T-cell (primary cell): ENCODE measurements at regions of chr20 and their contacts with region 1.

Region 1: DNA sequence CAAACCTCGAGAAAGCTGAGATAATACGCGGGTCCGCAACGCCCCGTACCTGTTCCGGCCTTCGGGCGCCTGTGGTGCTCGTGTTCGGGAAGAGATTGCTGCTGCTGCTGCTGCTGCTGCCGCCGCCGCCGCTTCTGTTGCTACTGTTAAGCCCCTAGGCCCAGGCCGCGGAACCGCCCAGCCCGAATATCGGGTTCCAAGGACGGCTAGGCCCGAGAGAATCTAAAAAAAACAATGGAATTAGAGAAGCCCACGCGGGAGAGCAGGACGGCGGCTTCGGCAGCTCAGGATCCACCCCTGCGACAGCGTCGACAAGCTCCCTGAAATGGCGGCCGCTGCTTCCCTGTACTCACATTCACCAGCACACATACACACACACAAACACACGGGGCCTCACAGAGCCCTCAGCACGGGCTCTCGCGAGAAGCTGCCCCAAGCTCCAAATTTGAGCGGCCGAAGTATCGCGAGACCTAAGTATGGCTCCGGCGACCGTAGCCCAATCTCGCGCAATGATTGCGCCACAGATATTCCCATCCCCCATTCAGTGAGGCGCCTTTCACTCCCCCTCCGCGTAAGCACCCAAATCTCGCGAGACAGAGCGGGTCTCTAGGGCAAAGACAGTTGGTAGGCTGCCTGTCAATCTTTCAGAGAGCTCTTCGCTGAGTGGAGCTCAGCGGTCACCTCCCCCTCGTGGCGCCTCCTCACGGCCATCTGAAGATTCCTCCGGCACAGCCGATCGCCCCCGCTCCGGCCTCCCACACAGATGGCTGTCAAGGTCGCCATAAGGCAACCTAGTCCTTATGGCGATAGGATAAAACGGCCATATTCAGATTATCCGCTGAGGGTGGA is at the start of gene RBM39:
- DNase-seq: peak; percentile 96 to 100 (median 99)
- ATAC-seq: peak; percentile 85 to 88 (median 86)
- H3K4me3 ChIP-seq: peak within 1 kb of the TSS; percentile 89 to 99
- H3K4me3 Mint-ChIP-seq: peak within 1 kb of the TSS; percentile 94 to 100 (median 99)
- H3K27ac ChIP-seq: peak within 1 kb of the TSS; percentile 99
- H3K27ac Mint-ChIP-seq: peak within 1 kb of the TSS; percentile 100
- H3K4me1 ChIP-seq: peaks cover 43% of the 10 kb centered on the region in 2 experiments
- H3K4me1 Mint-ChIP-seq: peaks cover 48 to 70% (median 52%) of the 10 kb centered on the region in 3 donors
- H3K27me3 ChIP-seq: no peaks in the 10 kb centered on the region
- H3K27me3 Mint-ChIP-seq: no peaks in the 10 kb centered on the region
- total RNA-seq, gene RBM39: 482 to 966 (median 536) TPM

Region 2: GRCh38 chr20:35699127-35699975 is 42.8 kb before region 1 on chr20 and contains the starts of genes NFS1 and ROMO1:
- CTCF ChIA-PET with region 1: interaction called in 1 of 2 experiments, 13 read pairs
- POLR2A ChIA-PET with region 1: interaction called, 4 to 13 read pairs
- DNase-seq: peak; percentile 59 to 93 (median 85)
- ATAC-seq: peak; percentile 86 to 95 (median 92)
- H3K4me3 ChIP-seq: peak within 1 kb of the TSS; percentile 66 to 94
- H3K4me3 Mint-ChIP-seq: peak within 1 kb of the TSS; percentile 87 to 100 (median 89)
- H3K27ac ChIP-seq: peak within 1 kb of the TSS; percentile 87
- H3K27ac Mint-ChIP-seq: peak within 1 kb of the TSS; percentile 89 to 93
- H3K4me1 ChIP-seq: peaks cover 16 to 19% of the 10 kb centered on the region in 2 experiments
- H3K4me1 Mint-ChIP-seq: peaks cover 47 to 60% (median 57%) of the 10 kb centered on the region in 3 donors
- H3K27me3 ChIP-seq: no peaks in the 10 kb centered on the region
- H3K27me3 Mint-ChIP-seq: no peaks in the 10 kb centered on the region
- total RNA-seq, gene NFS1: 17.7 to 33.5 (median 31.2) TPM
- total RNA-seq, gene ROMO1: 38.4 to 79.7 (median 62.5) TPM

Region 3: DNA sequence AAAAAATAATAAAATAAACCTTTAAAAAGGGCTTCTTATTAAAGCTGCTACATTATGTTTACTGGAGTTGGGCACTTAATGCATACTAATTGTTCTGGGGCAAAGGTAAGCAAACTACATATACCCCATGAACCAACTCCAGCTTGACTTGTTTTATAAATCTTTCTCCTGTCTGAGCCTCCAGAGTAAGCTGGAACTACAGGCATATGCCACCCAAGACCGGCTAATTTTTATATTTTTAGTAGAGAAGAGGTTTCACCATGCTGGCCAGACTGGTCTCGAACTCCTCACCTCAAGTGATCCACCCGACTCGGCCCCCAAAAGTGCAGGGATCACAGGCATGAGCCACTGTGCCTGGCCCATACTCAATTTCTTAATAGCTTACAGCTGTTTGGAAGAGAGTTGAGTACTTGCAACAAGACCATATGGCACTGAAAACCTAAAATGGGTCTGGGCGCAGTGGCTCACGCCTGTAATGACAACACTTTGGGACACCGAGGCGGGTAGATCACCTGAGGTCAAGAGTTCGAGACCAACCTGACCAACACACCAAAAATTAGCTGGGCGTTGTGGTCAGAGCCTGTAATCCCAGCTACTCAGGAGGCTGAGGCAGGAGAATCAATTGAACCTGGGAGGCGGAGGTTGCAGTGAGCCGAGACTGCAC is 23.0 kb before region 1 on chr20:
- CTCF ChIA-PET with region 1: interaction called in 1 of 2 experiments, 6 read pairs
- POLR2A ChIA-PET with region 1: interaction called, 6 to 20 read pairs
- DNase-seq: no peak
- ATAC-seq: peak in 1 of 4 experiments; percentile 4
- H3K4me3 ChIP-seq: no peak overlapping the region
- H3K4me3 Mint-ChIP-seq: no peak overlapping the region
- H3K27ac ChIP-seq: no peak overlapping the region
- H3K27ac Mint-ChIP-seq: no peak overlapping the region
- H3K4me1 ChIP-seq: peaks cover 0 to 46% of the 10 kb centered on the region in 2 experiments
- H3K4me1 Mint-ChIP-seq: peaks cover 50 to 60% (median 59%) of the 10 kb centered on the region in 3 donors
- H3K27me3 ChIP-seq: no peaks in the 10 kb centered on the region
- H3K27me3 Mint-ChIP-seq: no peaks in the 10 kb centered on the region

Region 4: GRCh38 chr20:35771689-35772562 is 29.8 kb after region 1 on chr20 and contains the start of gene PHF20:
- CTCF ChIA-PET with region 1: interaction called, 3 to 35 read pairs
- POLR2A ChIA-PET with region 1: interaction called, 42 to 246 read pairs
- DNase-seq: peak; percentile 98 to 100 (median 100)
- ATAC-seq: peak; percentile 84 to 92 (median 90)
- H3K4me3 ChIP-seq: peak within 1 kb of the TSS; percentile 66 to 85
- H3K4me3 Mint-ChIP-seq: peak within 1 kb of the TSS; percentile 84 to 99 (median 85)
- H3K27ac ChIP-seq: peak within 1 kb of the TSS; percentile 98
- H3K27ac Mint-ChIP-seq: peak within 1 kb of the TSS; percentile 93 to 96
- H3K4me1 ChIP-seq: peaks cover 71 to 86% of the 10 kb centered on the region in 2 experiments
- H3K4me1 Mint-ChIP-seq: peaks cover 73 to 87% (median 82%) of the 10 kb centered on the region in 3 donors
- H3K27me3 ChIP-seq: no peaks in the 10 kb centered on the region
- H3K27me3 Mint-ChIP-seq: no peaks in the 10 kb centered on the region
- total RNA-seq, gene PHF20: 67.8 to 174 (median 68.9) TPM

Region 5: GRCh38 chr20:35954200-35954906 is 212.2 kb after region 1 on chr20 and contains the start of gene SCAND1:
- CTCF ChIA-PET with region 1: interaction called in 1 of 2 experiments, 14 read pairs
- POLR2A ChIA-PET with region 1: interaction called in 1 of 2 experiments, 4 read pairs
- DNase-seq: peak; percentile 91 to 99 (median 95)
- ATAC-seq: peak; percentile 86 to 91 (median 88)
- H3K4me3 ChIP-seq: peak within 1 kb of the TSS; percentile 82 to 87
- H3K4me3 Mint-ChIP-seq: peak within 1 kb of the TSS; percentile 95 to 99 (median 99)
- H3K27ac ChIP-seq: peak within 1 kb of the TSS; percentile 98
- H3K27ac Mint-ChIP-seq: peak within 1 kb of the TSS; percentile 99 to 100
- H3K4me1 ChIP-seq: peaks cover 14 to 29% of the 10 kb centered on the region in 2 experiments
- H3K4me1 Mint-ChIP-seq: peaks cover 20 to 23% (median 21%) of the 10 kb centered on the region in 3 donors
- H3K27me3 ChIP-seq: no peaks in the 10 kb centered on the region
- H3K27me3 Mint-ChIP-seq: no peaks in the 10 kb centered on the region
- total RNA-seq, gene SCAND1: 50.0 to 78.8 (median 70.8) TPM